Sigmoid colon (tissue), 7 donors: ENCODE measurements at regions of chr17 and their contacts with region 1.

Region 1: DNA sequence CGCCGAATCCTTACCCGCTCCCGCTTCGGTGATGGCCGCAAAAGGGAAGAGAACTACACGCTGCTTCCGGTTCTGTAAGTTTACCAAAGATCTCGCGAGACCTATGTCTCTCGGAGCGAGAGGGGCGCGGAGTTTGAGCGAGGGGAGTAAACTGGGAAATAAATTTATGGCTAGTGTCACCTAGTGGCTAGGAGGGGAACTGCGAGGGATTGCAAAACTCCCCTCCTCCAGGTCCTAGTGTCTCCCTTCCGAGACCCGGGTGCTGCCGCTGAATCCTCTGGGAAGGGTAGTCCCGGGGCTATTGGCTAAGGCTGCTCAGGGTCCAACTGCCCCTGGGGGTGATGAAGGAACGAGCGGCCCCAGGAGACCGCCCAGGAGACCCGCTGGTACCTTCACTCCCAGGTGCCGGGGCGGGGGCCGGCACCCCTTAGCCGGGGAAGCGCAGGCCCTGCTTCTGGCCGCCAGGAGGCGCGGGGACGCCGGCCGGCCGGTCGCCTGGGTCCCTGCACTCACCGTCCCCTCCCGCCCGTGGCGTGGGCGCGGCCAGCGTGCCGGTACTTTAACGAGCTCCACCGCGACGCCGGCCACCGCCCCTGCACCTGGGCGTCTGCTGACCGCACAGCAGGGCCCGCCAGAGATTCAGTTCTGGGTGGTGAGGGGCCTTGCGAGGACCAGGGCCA is at the start of gene RPL26:
- DNase-seq: peak; percentile 99
- H3K4me3 ChIP-seq: peak within 1 kb of the TSS; percentile 64 to 84 (median 72)
- H3K27ac ChIP-seq: peak within 1 kb of the TSS; percentile 87 to 94 (median 92)
- H3K4me1 ChIP-seq: peaks cover 0 to 46% (median 34%) of the 10 kb centered on the region in 4 donors
- H3K27me3 ChIP-seq: no peaks in the 10 kb centered on the region
- CTCF ChIP-seq: peak; percentile 97 to 100 (median 98)
- EP300 ChIP-seq: no peak
- POLR2A ChIP-seq: no peak
- total RNA-seq, gene RPL26: 3,681 to 6,264 (median 5,219) TPM

Region 2: GRCh38 chr17:8314797-8315763 is 68.2 kb before region 1 on chr17:
- intact Hi-C with region 1: no loop called
- DNase-seq: no peak
- H3K4me3 ChIP-seq: no peak overlapping the region
- H3K27ac ChIP-seq: no peak overlapping the region
- H3K4me1 ChIP-seq: no peaks in the 10 kb centered on the region
- H3K27me3 ChIP-seq: peaks cover 12 to 62% (median 49%) of the 10 kb centered on the region in 3 donors
- CTCF ChIP-seq: no peak
- EP300 ChIP-seq: no peak
- POLR2A ChIP-seq: no peak

Region 3: GRCh38 chr17:8435245-8436168 is 52.2 kb after region 1 on chr17 and contains the start of gene NDEL1:
- intact Hi-C with region 1: loop called (anchors 1 kb)
- DNase-seq: peak; percentile 100
- H3K4me3 ChIP-seq: peak within 1 kb of the TSS; percentile 66 to 99 (median 72)
- H3K27ac ChIP-seq: peak within 1 kb of the TSS; percentile 92 to 100 (median 98)
- H3K4me1 ChIP-seq: peaks cover 0 to 22% (median 17%) of the 10 kb centered on the region in 4 donors
- H3K27me3 ChIP-seq: no peaks in the 10 kb centered on the region
- CTCF ChIP-seq: no peak
- EP300 ChIP-seq: peak in 1 of 4 donors; percentile 53
- POLR2A ChIP-seq: peak; percentile 95 to 96
- total RNA-seq, gene NDEL1: 34.9 to 56.8 (median 49.4) TPM

Region 4: GRCh38 chr17:8572764-8573163 is 189.5 kb after region 1 on chr17:
- intact Hi-C with region 1: no loop called
- DNase-seq: no peak
- H3K4me3 ChIP-seq: no peak overlapping the region
- H3K27ac ChIP-seq: no peak overlapping the region
- H3K4me1 ChIP-seq: no peaks in the 10 kb centered on the region
- H3K27me3 ChIP-seq: no peaks in the 10 kb centered on the region
- CTCF ChIP-seq: peak in 2 of 4 experiments; percentile 9 to 21
- EP300 ChIP-seq: no peak
- POLR2A ChIP-seq: no peak

Region 5: GRCh38 chr17:8670421-8670820 is 287.1 kb after region 1 on chr17:
- intact Hi-C with region 1: no loop called
- DNase-seq: no peak
- H3K4me3 ChIP-seq: no peak overlapping the region
- H3K27ac ChIP-seq: no peak overlapping the region
- H3K4me1 ChIP-seq: peaks cover 0 to 16% (median 0%) of the 10 kb centered on the region in 4 donors
- H3K27me3 ChIP-seq: no peaks in the 10 kb centered on the region
- CTCF ChIP-seq: no peak
- EP300 ChIP-seq: no peak
- POLR2A ChIP-seq: no peak